Activated CD4-positive, alpha-beta T cell treated with anti-CD3 and anti-CD28 coated beads for 36 hours (primary cell): ENCODE measurements at regions of chr17 and their contacts with region 1.

Region 1: DNA sequence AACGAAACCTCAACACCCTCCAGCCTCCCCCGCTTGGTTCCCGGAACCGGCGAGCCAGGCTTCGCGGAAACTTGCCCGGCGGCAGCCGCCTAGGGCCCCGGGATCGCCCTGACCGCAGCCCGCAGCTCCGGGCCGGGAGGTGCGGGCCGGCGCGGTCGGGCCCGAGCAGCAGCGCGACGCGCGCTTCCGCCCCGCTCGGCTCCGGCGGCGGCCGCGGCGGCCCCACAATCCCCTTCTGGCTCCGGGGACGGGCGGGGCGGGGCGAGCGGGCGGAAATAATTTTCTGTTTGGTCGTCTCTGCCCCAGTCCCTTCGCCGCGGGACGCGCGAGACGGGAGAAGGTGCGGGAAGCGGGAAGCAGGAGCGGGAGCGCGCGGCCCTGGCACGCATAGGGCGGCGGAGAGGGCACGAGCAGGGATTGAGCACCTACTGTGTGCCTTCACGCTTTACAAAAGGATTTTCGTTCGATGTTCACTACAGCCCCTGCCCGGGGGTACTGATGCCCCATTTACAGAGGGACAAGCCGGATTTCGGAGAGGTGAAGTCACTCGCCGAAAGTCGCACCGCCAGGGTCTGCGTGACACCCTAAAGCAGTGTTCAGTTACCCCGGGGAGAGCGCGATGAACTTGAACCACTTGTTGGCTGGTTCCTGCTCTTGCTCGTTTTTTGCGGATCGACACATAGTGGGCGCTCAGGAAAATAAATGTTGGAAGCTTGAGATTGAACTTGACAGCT is 2.7 kb upstream of the MLLT6 start:
- DNase-seq: peak; percentile 92
- ATAC-seq: peak; percentile 10
- H3K4me3 Mint-ChIP-seq: peak overlapping the region; percentile 95
- H3K27ac Mint-ChIP-seq: peak overlapping the region; percentile 100
- H3K4me1 Mint-ChIP-seq: peaks cover 48% of the 10 kb centered on the region
- H3K27me3 Mint-ChIP-seq: no peaks in the 10 kb centered on the region

Region 2: GRCh38 chr17:37406635-37407461 is 1295.5 kb before region 1 on chr17 and contains the starts of genes ACACA and TADA2A:
- CTCF ChIA-PET with region 1: no interaction called
- POLR2A ChIA-PET with region 1: no interaction called
- intact Hi-C with region 1: loop called in 1 of 2 experiments (anchors 5 kb)
- DNase-seq: peak; percentile 88
- ATAC-seq: peak; percentile 93
- H3K4me3 Mint-ChIP-seq: peak within 1 kb of the TSS; percentile 99
- H3K27ac Mint-ChIP-seq: peak within 1 kb of the TSS; percentile 98
- H3K4me1 Mint-ChIP-seq: peaks cover 46% of the 10 kb centered on the region
- H3K27me3 Mint-ChIP-seq: no peaks in the 10 kb centered on the region
- total RNA-seq, gene ACACA: 57.2 to 61.1 TPM
- total RNA-seq, gene TADA2A: 29.9 to 32.9 TPM

Region 3: DNA sequence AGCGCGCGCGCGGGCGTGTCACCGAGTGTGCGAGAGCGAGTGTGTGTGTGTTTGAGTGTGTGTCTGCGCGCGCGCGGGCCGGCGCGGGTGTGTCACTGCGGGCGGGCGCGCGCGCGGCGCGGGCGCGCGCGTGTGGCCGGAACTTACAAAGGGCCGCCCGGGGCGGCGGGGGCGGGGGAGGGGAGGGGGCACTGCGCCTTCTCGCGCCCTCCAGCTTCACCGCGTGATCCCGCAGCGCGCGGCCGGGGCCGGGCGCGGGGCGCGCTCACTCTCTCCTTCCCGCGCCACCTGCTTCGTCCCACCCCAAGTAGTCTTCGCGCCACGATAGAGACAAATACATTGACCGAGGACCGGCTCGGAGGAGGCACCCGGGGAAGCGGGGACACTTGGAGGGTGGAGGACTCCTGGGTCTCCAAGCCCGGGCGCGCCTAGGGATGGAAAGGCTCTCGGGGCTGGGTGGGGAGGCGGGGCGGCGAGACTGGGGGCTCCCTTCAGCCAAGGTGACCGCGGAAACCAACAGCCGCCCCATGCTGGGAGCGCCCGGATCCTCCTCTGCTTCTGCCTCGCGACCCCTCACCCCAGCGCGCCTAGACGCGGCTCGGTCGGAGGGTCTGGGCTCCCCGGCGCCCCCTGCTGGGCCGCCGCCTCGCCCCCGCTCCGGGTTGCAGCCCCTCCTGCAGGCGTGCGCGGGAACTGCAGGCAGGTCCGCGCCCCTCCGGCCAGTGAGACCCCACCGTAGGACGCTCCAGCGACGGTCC is 96.3 kb before region 1 on chr17 and contains the start of gene SRCIN1:
- CTCF ChIA-PET with region 1: no interaction called
- POLR2A ChIA-PET with region 1: no interaction called
- intact Hi-C with region 1: loop called in 1 of 2 experiments (anchors 1 kb)
- DNase-seq: peak; percentile 79
- ATAC-seq: peak; percentile 42
- H3K4me3 Mint-ChIP-seq: peak within 1 kb of the TSS; percentile 66
- H3K27ac Mint-ChIP-seq: no peak within 1 kb of the TSS
- H3K4me1 Mint-ChIP-seq: peaks cover 16% of the 10 kb centered on the region
- H3K27me3 Mint-ChIP-seq: peaks cover 56% of the 10 kb centered on the region
- total RNA-seq, gene SRCIN1: 0.72 to 0.73 TPM

Region 4: GRCh38 chr17:38735161-38735997 is 33.0 kb after region 1 on chr17:
- CTCF ChIA-PET with region 1: interaction called, 16 read pairs
- POLR2A ChIA-PET with region 1: no interaction called
- intact Hi-C with region 1: loop called in 1 of 2 experiments (anchors 1 kb)
- DNase-seq: peak; percentile 85
- ATAC-seq: peak; percentile 21
- H3K4me3 Mint-ChIP-seq: no peak overlapping the region
- H3K27ac Mint-ChIP-seq: no peak overlapping the region
- H3K4me1 Mint-ChIP-seq: peaks cover 45% of the 10 kb centered on the region
- H3K27me3 Mint-ChIP-seq: no peaks in the 10 kb centered on the region

Region 5: GRCh38 chr17:38824899-38825761 is 122.8 kb after region 1 on chr17 and contains the start of gene CWC25:
- CTCF ChIA-PET with region 1: no interaction called
- POLR2A ChIA-PET with region 1: no interaction called
- intact Hi-C with region 1: loop called in 1 of 2 experiments (anchors 2 kb)
- DNase-seq: peak; percentile 95
- ATAC-seq: peak; percentile 82
- H3K4me3 Mint-ChIP-seq: peak within 1 kb of the TSS; percentile 99
- H3K27ac Mint-ChIP-seq: peak within 1 kb of the TSS; percentile 99
- H3K4me1 Mint-ChIP-seq: peaks cover 27% of the 10 kb centered on the region
- H3K27me3 Mint-ChIP-seq: no peaks in the 10 kb centered on the region
- total RNA-seq, gene CWC25: 23.3 to 24.0 TPM

Region 6: GRCh38 chr17:38898812-38899348 is 196.5 kb after region 1 on chr17:
- CTCF ChIA-PET with region 1: no interaction called
- POLR2A ChIA-PET with region 1: no interaction called
- intact Hi-C with region 1: loop called in 1 of 2 experiments (anchors 2 kb)
- DNase-seq: peak; percentile 95
- ATAC-seq: peak; percentile 91
- H3K4me3 Mint-ChIP-seq: peak overlapping the region; percentile 70
- H3K27ac Mint-ChIP-seq: peak overlapping the region; percentile 98
- H3K4me1 Mint-ChIP-seq: peaks cover 65% of the 10 kb centered on the region
- H3K27me3 Mint-ChIP-seq: no peaks in the 10 kb centered on the region

Region 7: GRCh38 chr17:39450847-39451581 is 748.7 kb after region 1 on chr17 and contains the start of gene MED1:
- CTCF ChIA-PET with region 1: no interaction called
- POLR2A ChIA-PET with region 1: no interaction called
- intact Hi-C with region 1: loop called in 1 of 2 experiments (anchors 5 kb)
- DNase-seq: peak; percentile 96
- ATAC-seq: peak; percentile 99
- H3K4me3 Mint-ChIP-seq: peak within 1 kb of the TSS; percentile 96
- H3K27ac Mint-ChIP-seq: peak within 1 kb of the TSS; percentile 96
- H3K4me1 Mint-ChIP-seq: peaks cover 30% of the 10 kb centered on the region
- H3K27me3 Mint-ChIP-seq: no peaks in the 10 kb centered on the region
- total RNA-seq, gene MED1: 66.1 to 76.1 TPM